H1 (cell line): ENCODE measurements at regions of chr14 and their contacts with region 1.

Region 1: DNA sequence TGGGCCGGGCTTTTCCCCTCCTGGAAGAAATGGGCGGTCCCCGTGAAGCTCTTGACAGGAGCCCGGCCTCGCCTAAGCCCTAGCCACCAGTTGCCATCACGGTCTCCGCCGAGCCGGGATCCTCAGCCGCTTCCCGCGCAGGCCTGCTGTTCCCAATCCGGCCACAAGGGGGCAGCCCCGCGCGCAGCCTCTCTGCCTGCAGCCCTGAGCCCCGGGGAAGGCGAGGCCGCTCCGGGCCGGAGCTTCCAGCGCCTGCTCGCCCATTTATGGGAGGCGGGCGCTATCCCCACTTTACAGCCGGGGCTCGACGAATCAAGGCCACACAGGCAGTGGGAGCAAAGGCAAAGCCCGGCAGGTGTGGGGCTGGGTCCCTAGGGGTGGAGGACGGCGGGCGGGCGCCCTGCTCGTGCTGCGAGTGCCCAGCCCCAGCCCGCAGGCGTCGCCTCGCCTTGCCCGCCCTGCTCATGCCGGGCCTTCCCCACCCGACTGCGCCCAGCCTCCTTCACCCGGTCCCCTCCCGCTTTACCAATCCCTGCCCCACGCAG is 61.5 kb downstream of the LGMN start:
- DNase-seq: peak; percentile 66 to 99
- H3K4me3 ChIP-seq: peak overlapping the region; percentile 33 to 68 (median 44)
- H3K27ac ChIP-seq: no peak overlapping the region
- H3K4me1 ChIP-seq: peaks cover 0 to 9% (median 3%) of the 10 kb centered on the region in 4 experiments; a peak in 4 of 7 replicates
- H3K27me3 ChIP-seq: peaks cover 10 to 21% (median 20%) of the 10 kb centered on the region in 4 experiments; a peak in 6 of 7 replicates
- CTCF ChIP-seq: peak; percentile 89 to 92 (median 90)
- EP300 ChIP-seq: no peak
- POLR2A ChIP-seq: 0 out of 3 replicates have a peak, but pooled peaks of 1 of the 2 experiments have one; percentile 21
- RAD21 ChIP-seq: peak; percentile 69 to 78

Region 2: DNA sequence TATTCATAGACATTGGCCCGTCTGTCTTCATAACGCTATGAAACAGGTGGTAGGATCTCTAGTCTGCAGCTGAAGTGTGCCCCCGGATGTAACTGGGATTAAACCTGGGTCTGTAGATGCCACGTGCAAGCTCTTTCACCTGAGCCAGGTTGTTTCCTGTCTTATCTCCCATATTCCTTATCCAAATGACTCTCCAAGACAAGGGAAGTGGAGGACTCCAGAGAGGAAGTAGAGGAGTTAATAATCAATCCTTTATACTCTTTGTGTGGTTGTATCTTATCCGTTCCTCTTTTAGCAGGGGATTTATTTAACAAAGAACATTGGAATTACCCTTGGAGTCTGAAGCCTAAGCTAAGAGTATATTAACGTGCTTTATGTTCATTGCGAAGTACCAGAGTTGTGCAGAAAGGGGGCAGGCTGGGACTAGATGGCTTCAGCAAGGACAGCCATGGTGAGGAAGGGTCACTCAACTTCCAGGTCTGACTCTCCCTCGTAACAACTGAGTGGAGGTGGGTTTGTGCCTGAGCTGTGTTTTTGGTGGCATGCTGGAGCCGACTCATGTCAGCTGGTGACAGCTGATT is 90.6 kb before region 1 on chr14:
- CTCF ChIA-PET with region 1: interaction called, 31 read pairs
- POLR2A ChIA-PET with region 1: no interaction called
- DNase-seq: no peak
- H3K4me3 ChIP-seq: no peak overlapping the region
- H3K27ac ChIP-seq: no peak overlapping the region
- H3K4me1 ChIP-seq: no peaks in the 10 kb centered on the region
- H3K27me3 ChIP-seq: no peaks in the 10 kb centered on the region; a peak in 1 of 7 replicates
- CTCF ChIP-seq: peak; percentile 56 to 68 (median 56)
- EP300 ChIP-seq: no peak
- POLR2A ChIP-seq: no peak
- RAD21 ChIP-seq: peak; percentile 59 to 71

Region 3: GRCh38 chr14:92603309-92604242 is 83.4 kb before region 1 on chr14:
- CTCF ChIA-PET with region 1: interaction called, 31 read pairs
- POLR2A ChIA-PET with region 1: no interaction called
- DNase-seq: no peak
- H3K4me3 ChIP-seq: no peak overlapping the region
- H3K27ac ChIP-seq: no peak overlapping the region
- H3K4me1 ChIP-seq: no peaks in the 10 kb centered on the region
- H3K27me3 ChIP-seq: no peaks in the 10 kb centered on the region
- CTCF ChIP-seq: peak; percentile 31 to 39 (median 35); a peak in 3 of 4 replicates
- EP300 ChIP-seq: no peak
- POLR2A ChIP-seq: no peak
- RAD21 ChIP-seq: peak; percentile 41 to 54

Region 4: DNA sequence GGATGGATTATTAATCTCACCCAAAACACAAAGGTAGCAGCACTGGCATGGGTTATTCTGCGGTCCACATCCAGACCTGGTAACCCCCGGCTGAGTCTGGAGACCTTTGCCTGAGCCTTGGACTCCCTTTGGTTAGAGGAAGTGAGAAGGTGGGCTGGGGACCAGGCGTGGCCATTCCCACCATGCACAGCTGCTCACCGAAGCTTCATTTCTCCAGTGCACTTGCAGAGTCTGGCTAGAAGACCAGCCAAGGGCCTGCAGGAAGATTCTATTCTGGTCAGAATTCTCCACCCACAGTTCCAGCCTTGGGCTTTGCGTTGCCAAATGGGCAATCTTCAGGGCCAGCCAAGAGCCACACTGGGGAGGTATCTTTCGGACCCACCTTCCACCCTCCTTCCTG is 11.6 kb before region 1 on chr14:
- CTCF ChIA-PET with region 1: interaction called, 16 read pairs
- POLR2A ChIA-PET with region 1: interaction called, 4 read pairs
- DNase-seq: no peak
- H3K4me3 ChIP-seq: no peak overlapping the region
- H3K27ac ChIP-seq: no peak overlapping the region
- H3K4me1 ChIP-seq: no peaks in the 10 kb centered on the region; a peak in 1 of 7 replicates
- H3K27me3 ChIP-seq: no peaks in the 10 kb centered on the region
- CTCF ChIP-seq: no peak
- EP300 ChIP-seq: no peak
- POLR2A ChIP-seq: no peak
- RAD21 ChIP-seq: no peak

Region 5: DNA sequence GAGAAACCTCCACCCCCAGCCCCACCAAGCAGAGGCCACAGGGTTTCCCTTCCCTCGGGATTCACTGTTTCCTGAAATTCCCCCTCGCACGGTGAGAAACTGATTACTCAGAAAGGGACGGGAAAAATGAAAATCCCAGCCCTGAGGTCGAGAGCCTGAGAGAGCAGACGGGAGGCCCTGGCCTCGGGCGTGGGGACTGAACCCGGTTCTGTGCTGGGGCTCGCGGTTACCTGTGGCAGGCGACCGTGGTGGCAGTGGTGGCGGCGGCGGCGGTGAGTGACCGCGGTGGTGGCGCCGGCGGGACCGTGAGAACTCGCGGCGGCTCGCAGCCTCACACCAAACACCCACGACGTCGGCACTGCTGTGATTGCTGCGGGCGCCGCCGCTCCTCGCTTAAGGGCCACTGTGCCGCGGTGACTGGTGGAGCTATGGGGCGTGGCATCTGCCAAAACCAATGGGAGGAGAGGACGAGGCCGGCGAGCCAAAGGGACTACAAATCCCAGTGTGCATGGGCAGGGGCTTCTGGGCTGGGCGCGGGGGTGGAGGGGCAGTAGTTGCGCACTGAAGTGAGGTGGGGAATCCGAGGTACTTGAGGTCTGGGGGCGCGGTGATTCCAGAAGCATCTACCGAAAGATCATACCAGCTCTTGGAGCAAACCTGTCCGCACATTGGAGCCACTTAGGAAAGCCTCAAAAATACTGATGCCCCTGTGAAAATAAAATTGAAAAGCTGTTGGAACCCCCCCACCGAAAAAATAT is 61.5 kb after region 1 on chr14 and contains the start of gene LGMN:
- CTCF ChIA-PET with region 1: interaction called, 10 read pairs
- POLR2A ChIA-PET with region 1: no interaction called
- DNase-seq: peak; percentile 82 to 92
- H3K4me3 ChIP-seq: peak within 1 kb of the TSS; percentile 74 to 90 (median 81)
- H3K27ac ChIP-seq: no peak within 1 kb of the TSS
- H3K4me1 ChIP-seq: peaks cover 0 to 3% (median 2%) of the 10 kb centered on the region in 4 experiments; a peak in 2 of 7 replicates
- H3K27me3 ChIP-seq: peaks cover 0 to 3% (median 0%) of the 10 kb centered on the region in 4 experiments; a peak in 2 of 7 replicates
- CTCF ChIP-seq: no peak
- EP300 ChIP-seq: no peak
- POLR2A ChIP-seq: peak; percentile 70 to 73
- RAD21 ChIP-seq: no peak
- total RNA-seq, gene LGMN: 57.4 and 57.9 TPM in 2 replicates

Region 6: GRCh38 chr14:92783816-92784431 is 97.0 kb after region 1 on chr14:
- CTCF ChIA-PET with region 1: interaction called, 13 read pairs
- POLR2A ChIA-PET with region 1: interaction called, 4 read pairs
- DNase-seq: no peak
- H3K4me3 ChIP-seq: no peak overlapping the region
- H3K27ac ChIP-seq: no peak overlapping the region
- H3K4me1 ChIP-seq: peaks cover 0 to 3% (median 0%) of the 10 kb centered on the region in 4 experiments; a peak in 1 of 7 replicates
- H3K27me3 ChIP-seq: no peaks in the 10 kb centered on the region; a peak in 1 of 7 replicates
- CTCF ChIP-seq: peak in 2 of 3 experiments; percentile 37 to 38; a peak in 2 of 4 replicates
- EP300 ChIP-seq: no peak
- POLR2A ChIP-seq: no peak
- RAD21 ChIP-seq: peak; percentile 60 to 62